MCF 10A (cell line): ENCODE measurements at regions of chr21 and their contacts with region 1.

Region 1: GRCh38 chr21:14259747-14260146 is 43.8 kb downstream of the RBM11 start:
- DNase-seq: peak; percentile 65
- H3K4me3 Mint-ChIP-seq: no peak overlapping the region
- H3K27ac Mint-ChIP-seq: no peak overlapping the region
- H3K4me1 Mint-ChIP-seq: no peaks in the 10 kb centered on the region
- H3K27me3 Mint-ChIP-seq: no peaks in the 10 kb centered on the region
- CTCF ChIP-seq: peak; percentile 56

Region 2: DNA sequence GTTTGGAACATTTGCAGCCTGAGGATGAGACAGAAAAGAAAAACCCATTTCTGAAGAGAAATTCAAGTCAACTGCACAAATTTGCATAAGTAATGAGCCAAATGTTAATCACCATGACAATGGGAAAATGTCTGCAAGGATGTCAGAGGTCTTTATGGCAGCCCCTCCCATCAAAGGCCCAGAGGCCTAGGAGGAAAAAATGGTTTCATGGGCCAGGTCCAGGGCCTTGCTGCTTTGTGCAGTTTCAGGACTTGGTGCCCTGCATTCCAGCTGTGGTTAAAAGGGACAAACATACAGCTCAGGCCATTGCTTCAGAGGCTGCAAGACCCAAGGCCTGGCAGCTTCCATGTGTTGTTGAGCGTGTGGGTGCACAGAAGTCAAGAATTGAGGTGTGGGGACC is 30.3 kb before region 1 on chr21:
- CTCF ChIA-PET with region 1: no interaction called
- POLR2A ChIA-PET with region 1: no interaction called
- intact Hi-C with region 1: no loop called
- DNase-seq: no peak
- H3K4me3 Mint-ChIP-seq: no peak overlapping the region
- H3K27ac Mint-ChIP-seq: no peak overlapping the region
- H3K4me1 Mint-ChIP-seq: no peaks in the 10 kb centered on the region
- H3K27me3 Mint-ChIP-seq: no peaks in the 10 kb centered on the region
- CTCF ChIP-seq: no peak

Region 3: DNA sequence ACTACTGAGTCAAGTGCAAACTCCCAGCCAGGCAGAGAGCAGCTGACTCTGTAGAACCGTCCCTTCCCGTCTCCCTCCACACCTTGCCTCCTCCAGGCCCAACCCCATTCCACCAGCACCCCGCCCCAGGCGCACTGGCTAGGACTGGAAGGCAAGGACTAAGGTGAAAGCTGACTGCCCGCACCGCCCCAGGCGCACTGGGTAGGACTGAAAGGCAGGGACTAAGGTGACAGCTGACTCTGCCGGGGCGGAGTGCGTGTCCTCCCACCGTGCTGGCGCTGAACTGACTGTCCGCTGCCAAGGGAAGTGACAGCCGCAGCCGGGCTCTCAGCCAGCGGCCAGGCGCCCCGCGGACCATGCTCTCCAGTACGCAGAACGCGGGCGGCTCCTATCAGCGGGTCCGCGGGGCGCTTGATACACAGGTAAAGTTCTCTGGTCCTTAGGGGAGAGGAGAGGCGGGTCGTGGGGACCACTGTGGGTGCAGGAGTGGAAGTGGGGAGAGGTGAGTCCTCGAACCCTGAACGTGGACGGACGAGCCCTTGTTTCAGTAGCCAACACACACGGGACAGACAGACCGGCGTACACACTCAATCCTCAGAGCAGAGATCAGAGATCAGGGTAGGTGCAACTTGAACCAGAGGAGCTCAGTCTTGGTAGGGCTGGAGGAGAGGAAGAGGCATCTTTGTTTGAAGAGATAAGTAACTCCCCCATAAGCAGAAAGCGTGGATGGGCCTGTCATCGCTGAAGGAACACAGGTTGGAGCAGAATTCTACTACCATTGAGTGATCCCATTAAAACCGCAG is 14.2 kb after region 1 on chr21:
- CTCF ChIA-PET with region 1: interaction called, 23 read pairs
- POLR2A ChIA-PET with region 1: no interaction called
- intact Hi-C with region 1: no loop called
- DNase-seq: no peak
- H3K4me3 Mint-ChIP-seq: no peak overlapping the region
- H3K27ac Mint-ChIP-seq: no peak overlapping the region
- H3K4me1 Mint-ChIP-seq: peaks cover 12% of the 10 kb centered on the region
- H3K27me3 Mint-ChIP-seq: no peaks in the 10 kb centered on the region
- CTCF ChIP-seq: no peak

Region 4: DNA sequence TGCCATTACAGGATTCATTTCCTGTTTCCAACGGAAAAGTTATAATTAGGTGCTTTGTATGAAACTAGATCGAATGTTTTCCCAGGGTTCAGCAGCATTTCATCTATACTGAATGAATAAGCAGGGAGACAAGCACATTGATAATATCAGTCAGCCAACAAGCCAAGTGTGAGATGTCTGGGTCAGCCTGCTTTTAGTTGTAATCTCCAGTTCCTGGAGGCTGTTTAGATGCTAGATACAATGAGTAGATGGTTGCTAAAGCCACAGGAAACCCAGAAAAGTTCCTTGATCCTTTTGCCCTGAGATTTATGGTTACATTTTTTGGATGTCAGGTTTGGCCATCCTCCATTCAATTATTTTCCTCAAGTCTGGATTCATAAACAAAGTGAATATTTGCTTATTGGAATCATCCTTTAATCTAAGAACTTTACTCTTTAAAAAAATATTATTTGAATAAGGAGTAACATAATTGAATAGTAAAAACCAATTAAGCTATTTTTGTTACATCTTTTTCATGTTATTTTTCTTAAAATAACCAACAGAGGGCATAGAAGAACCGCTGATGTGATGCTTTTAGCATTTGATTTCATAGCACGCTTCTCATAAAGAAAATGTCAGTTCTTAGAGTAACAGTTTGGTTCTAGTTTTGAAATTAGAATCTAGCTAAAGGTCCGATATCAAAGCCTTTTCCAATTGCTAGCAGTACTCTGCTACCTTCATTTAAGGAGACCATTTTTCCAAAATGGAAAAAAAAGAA is 46.6 kb after region 1 on chr21:
- CTCF ChIA-PET with region 1: interaction called, 6 read pairs
- POLR2A ChIA-PET with region 1: no interaction called
- intact Hi-C with region 1: loop called (anchors 10 kb)
- DNase-seq: peak; percentile 46
- H3K4me3 Mint-ChIP-seq: no peak overlapping the region
- H3K27ac Mint-ChIP-seq: no peak overlapping the region
- H3K4me1 Mint-ChIP-seq: peaks cover 8% of the 10 kb centered on the region
- H3K27me3 Mint-ChIP-seq: no peaks in the 10 kb centered on the region
- CTCF ChIP-seq: peak; percentile 55

Region 5: GRCh38 chr21:14773777-14774345 is 514.1 kb after region 1 on chr21:
- CTCF ChIA-PET with region 1: no interaction called
- POLR2A ChIA-PET with region 1: no interaction called
- intact Hi-C with region 1: loop called (anchors 1 kb)
- DNase-seq: peak; percentile 72
- H3K4me3 Mint-ChIP-seq: no peak overlapping the region
- H3K27ac Mint-ChIP-seq: no peak overlapping the region
- H3K4me1 Mint-ChIP-seq: no peaks in the 10 kb centered on the region
- H3K27me3 Mint-ChIP-seq: no peaks in the 10 kb centered on the region
- CTCF ChIP-seq: peak; percentile 65

Region 6: DNA sequence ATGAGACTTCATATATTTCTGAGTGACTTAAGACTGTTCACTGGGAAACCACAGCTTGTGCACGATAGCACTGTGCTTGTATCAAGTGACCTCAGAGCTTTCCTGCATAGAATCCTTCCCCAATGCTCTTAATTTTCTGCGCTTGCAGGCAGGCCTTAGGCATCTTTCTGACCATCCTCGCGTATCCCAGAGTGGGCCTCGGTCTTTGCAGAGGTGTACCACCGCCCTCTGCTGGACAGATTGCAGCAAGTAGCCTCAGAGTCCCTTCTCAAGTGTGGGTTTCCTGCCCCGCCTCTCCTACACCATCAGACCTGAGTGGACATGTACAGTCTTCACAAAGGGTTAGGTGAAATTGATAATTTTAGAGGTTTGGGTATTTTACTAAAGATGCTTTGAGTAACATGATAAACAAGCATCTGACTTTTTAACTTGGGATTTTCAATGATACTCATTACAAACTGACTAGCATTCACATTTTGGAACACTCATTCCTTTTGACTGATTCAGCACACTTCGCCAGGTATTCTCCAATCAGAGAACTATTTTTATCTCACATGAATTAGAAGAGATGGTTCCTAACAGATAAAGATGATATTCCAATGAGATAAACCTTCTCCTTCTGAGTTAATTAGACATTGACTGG is 1223.5 kb after region 1 on chr21:
- CTCF ChIA-PET with region 1: no interaction called
- POLR2A ChIA-PET with region 1: no interaction called
- intact Hi-C with region 1: loop called (anchors 1 kb)
- DNase-seq: peak; percentile 88
- H3K4me3 Mint-ChIP-seq: no peak overlapping the region
- H3K27ac Mint-ChIP-seq: no peak overlapping the region
- H3K4me1 Mint-ChIP-seq: no peaks in the 10 kb centered on the region
- H3K27me3 Mint-ChIP-seq: no peaks in the 10 kb centered on the region
- CTCF ChIP-seq: peak; percentile 96